Esophagus squamous epithelium (tissue), 5 donors: ENCODE measurements at regions of chr11 and their contacts with region 1.

Region 1: DNA sequence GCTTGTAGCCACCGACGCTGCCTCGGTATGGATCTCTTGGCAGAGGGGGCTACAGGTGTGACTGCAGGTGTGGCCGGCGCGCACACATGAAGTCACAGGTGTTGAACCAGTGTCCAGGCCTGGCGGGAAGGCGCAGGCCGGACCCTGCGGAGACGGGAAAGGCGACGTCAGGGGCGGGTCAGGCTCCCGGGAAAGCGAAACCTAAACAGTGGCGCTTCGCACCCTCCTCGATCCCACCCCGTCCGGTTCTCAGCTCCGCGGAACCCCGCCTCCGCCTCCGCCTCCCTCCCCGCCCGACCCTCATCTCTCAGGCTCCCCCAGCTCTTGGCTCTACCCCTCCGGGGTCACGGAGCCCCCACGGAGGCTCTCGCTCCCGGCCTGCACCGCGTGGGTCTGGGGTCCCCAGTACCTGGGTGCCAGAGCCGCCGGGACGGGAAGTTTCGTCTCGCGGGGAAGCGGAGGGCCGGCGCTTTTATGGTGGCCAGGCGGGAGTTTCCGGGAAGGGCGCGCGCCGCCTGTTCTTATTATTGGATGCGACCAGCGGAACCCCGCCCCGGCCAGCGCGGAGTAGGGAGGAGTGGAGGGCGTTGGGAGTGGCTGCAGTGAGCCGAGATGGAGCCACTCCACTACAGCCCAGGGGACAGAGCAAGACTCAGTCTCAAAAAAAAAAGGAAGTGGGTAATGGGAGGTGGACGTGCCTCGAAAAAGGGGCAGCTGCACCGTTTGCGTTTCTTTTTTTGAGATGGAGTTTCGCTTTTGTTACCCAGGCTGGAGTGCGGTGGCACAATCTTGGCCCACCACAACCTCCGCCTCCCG is at the start of gene IRF7:
- DNase-seq: peak; percentile 92
- H3K4me3 ChIP-seq: peak within 1 kb of the TSS; percentile 58 to 78 (median 72)
- H3K27ac ChIP-seq: peak within 1 kb of the TSS; percentile 94 to 98 (median 97)
- H3K4me1 ChIP-seq: peaks cover 32 to 58% (median 45%) of the 10 kb centered on the region in 3 donors
- H3K27me3 ChIP-seq: no peaks in the 10 kb centered on the region
- CTCF ChIP-seq: no peak
- POLR2A ChIP-seq: peak in 2 of 4 donors; percentile 71 to 87
- total RNA-seq, gene IRF7: 16.9 to 26.3 (median 20.2) TPM

Region 2: GRCh38 chr11:554824-555472 is 60.8 kb before region 1 on chr11:
- intact Hi-C with region 1: no loop called
- DNase-seq: no peak
- H3K4me3 ChIP-seq: peak overlapping the region; percentile 27 to 62 (median 44)
- H3K27ac ChIP-seq: peak overlapping the region in 1 of 4 donors; percentile 9
- H3K4me1 ChIP-seq: peaks cover 16 to 34% (median 24%) of the 10 kb centered on the region in 3 donors
- H3K27me3 ChIP-seq: peaks cover 0 to 93% (median 3%) of the 10 kb centered on the region in 4 donors
- CTCF ChIP-seq: peak; percentile 52 to 71 (median 64)
- POLR2A ChIP-seq: no peak

Region 3: DNA sequence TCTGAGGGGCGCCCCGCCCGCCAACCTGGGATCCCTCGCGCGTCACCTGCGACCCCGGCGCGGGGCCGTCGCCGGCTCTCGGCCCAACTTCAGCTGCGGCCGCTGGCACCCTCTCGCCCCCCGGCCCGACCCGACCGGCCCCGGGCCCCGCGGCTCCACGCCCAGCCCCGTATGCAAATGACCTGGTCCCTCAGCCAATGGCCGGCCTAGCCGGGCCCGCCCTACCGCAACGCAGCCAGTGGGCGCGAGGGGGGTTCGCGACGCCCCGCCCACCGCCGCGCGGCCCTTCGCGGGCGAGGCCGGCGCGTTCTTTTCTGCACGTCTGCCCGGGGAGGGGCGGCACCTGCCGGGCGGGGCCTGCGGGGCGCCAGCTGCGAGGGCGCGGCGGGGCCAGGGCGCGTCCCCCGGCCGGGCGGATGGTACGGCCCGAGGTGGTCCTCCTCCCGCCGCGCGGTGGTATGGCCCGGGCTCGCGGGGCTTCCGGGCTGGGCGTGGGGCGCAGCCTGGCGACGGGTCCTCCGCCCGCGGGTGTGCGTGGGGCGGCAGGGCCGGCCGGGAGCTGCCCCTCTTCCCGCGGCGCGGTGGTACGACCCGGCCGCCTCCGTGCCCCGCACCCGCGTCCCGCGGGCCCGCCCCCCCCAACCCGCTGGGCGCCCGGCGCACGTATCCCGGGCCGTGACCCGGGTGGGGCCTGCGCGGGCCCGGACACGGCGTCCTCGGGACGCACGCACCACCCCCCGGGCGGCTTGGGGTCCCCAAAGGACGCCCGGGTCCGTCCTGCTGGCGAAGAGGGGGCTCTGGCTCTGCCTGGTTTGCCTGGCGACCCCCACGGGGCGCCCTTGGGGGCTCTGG is 47.2 kb before region 1 on chr11:
- intact Hi-C with region 1: loop called (anchors 5 kb)
- DNase-seq: no peak
- H3K4me3 ChIP-seq: peak overlapping the region; percentile 65 to 90 (median 66)
- H3K27ac ChIP-seq: peak overlapping the region; percentile 93 to 96 (median 96)
- H3K4me1 ChIP-seq: peaks cover 10 to 56% (median 11%) of the 10 kb centered on the region in 3 donors
- H3K27me3 ChIP-seq: no peaks in the 10 kb centered on the region
- CTCF ChIP-seq: peak in 3 of 6 experiments; percentile 1 to 14 (median 10)
- POLR2A ChIP-seq: peak in 3 of 4 donors; percentile 47 to 73 (median 72)

Region 4: DNA sequence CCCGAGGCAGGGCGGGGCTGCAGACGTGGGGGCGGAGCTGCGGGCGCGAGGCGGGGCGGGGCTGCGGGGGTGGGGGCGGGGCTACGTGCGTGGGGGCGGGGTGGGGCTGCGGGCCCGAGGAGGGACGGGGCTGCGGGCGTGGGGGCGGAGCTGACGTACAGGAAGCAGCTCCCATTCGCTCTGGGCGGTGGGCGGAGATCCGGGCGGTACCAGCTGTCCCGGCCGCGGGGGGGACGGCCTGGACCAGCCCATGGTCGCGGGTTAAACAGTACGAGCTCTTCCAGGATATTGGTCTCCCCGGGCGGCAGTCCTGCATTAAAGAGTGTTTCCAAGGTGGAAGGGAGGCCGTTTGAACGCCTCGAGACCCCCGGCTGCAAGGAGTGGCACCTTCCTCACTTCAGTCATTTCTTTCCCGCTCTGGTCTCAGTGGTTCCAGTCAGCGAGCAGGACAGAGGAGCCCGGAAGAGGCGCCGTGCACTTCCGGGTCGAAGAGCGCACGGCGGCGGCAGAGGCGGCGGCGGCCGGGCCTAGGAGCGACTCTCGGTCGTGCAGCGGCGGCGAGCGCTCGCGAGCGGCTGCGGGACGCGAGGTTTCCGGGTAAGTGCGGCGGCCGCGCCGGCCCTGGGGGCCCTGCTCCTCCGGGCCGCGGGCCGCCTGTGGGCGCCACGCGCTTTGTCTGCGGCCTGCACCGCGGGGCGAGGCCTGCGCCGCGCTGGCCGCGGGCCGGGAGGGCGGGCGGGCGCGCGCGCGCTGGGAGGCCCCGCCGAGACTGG is 39.5 kb before region 1 on chr11 and contains the start of gene PHRF1:
- intact Hi-C with region 1: loop called (anchors 5 kb)
- DNase-seq: peak; percentile 74
- H3K4me3 ChIP-seq: peak within 1 kb of the TSS; percentile 73 to 97 (median 82)
- H3K27ac ChIP-seq: peak within 1 kb of the TSS; percentile 94 to 99 (median 96)
- H3K4me1 ChIP-seq: peaks cover 41 to 60% (median 43%) of the 10 kb centered on the region in 3 donors
- H3K27me3 ChIP-seq: peaks cover 0 to 9% (median 0%) of the 10 kb centered on the region in 4 donors
- CTCF ChIP-seq: peak in 1 of 6 experiments; percentile 19
- POLR2A ChIP-seq: peak in 3 of 4 donors; percentile 59 to 91 (median 76)
- total RNA-seq, gene PHRF1: 11.7 to 30.6 (median 24.2) TPM

Region 5: DNA sequence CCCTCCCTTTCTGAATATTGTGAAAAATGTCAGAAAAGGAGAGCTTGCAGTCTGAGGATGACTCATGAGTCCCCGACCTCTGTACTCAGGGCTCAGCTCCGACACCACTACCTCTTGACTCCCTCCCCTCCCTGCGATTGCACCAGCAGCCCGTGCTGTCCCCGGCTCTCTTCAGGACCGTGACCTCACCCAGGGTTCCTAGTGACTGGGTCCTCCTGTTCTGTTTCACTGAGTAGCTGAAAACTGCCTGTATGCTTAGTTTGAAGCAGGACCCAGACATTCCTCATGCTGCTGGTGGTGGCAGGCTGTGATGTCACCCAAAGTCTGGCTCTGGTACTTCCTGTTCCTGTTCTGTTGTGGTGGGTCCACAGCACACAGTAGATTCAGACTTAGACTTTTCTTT is 27.7 kb before region 1 on chr11:
- intact Hi-C with region 1: no loop called
- DNase-seq: no peak
- H3K4me3 ChIP-seq: no peak overlapping the region
- H3K27ac ChIP-seq: peak overlapping the region in 2 of 4 donors; percentile 54 to 58
- H3K4me1 ChIP-seq: no peaks in the 10 kb centered on the region
- H3K27me3 ChIP-seq: no peaks in the 10 kb centered on the region
- CTCF ChIP-seq: no peak
- POLR2A ChIP-seq: no peak